Endothelial cell of umbilical vein (primary cell): ENCODE measurements at regions of chr15 and their contacts with region 1.

Region 1: GRCh38 chr15:39429898-39430357 is 151.0 kb upstream of the THBS1 start:
- DNase-seq: peak; percentile 99
- H3K4me3 ChIP-seq: no peak overlapping the region
- H3K27ac ChIP-seq: peak overlapping the region; percentile 98
- H3K4me1 ChIP-seq: peaks cover 52% of the 10 kb centered on the region
- H3K27me3 ChIP-seq: no peaks in the 10 kb centered on the region
- CTCF ChIP-seq: no peak
- POLR2A ChIP-seq: peak; percentile 75

Region 2: GRCh38 chr15:39140060-39140604 is 289.8 kb before region 1 on chr15:
- CTCF ChIA-PET with region 1: no interaction called
- POLR2A ChIA-PET with region 1: interaction called, 7 read pairs
- dilution Hi-C with region 1: no loop called
- intact Hi-C with region 1: loop called (anchors 1 kb)
- DNase-seq: peak; percentile 100
- H3K4me3 ChIP-seq: no peak overlapping the region
- H3K27ac ChIP-seq: peak overlapping the region; percentile 96
- H3K4me1 ChIP-seq: peaks cover 34% of the 10 kb centered on the region
- H3K27me3 ChIP-seq: no peaks in the 10 kb centered on the region
- CTCF ChIP-seq: no peak
- POLR2A ChIP-seq: peak; percentile 90

Region 3: DNA sequence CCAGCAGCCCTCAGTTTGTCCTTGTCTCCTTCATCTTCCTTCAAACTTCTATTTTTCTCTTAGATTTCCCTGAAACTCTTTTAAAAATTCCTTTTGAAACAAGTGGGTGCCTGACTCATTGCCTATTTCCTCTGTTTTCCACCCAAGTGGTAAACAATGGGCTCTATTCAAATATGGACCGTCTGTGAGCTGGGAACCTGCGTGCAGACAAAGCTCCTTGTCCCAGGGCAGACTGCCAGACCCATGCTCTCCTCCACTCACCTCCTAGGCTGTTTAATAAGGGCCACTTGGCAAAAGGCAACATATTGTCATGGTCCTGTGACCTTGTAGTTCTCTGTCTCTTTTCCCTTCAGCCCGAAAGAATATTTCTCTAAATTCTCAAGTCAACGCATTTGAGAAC is 181.7 kb before region 1 on chr15:
- CTCF ChIA-PET with region 1: no interaction called
- POLR2A ChIA-PET with region 1: interaction called, 3 read pairs
- dilution Hi-C with region 1: no loop called
- intact Hi-C with region 1: loop called (anchors 1 kb)
- DNase-seq: peak; percentile 99
- H3K4me3 ChIP-seq: peak overlapping the region in 1 of 3 experiments; percentile 0
- H3K27ac ChIP-seq: peak overlapping the region; percentile 98
- H3K4me1 ChIP-seq: peaks cover 72% of the 10 kb centered on the region
- H3K27me3 ChIP-seq: no peaks in the 10 kb centered on the region
- CTCF ChIP-seq: no peak
- POLR2A ChIP-seq: no peak

Region 4: DNA sequence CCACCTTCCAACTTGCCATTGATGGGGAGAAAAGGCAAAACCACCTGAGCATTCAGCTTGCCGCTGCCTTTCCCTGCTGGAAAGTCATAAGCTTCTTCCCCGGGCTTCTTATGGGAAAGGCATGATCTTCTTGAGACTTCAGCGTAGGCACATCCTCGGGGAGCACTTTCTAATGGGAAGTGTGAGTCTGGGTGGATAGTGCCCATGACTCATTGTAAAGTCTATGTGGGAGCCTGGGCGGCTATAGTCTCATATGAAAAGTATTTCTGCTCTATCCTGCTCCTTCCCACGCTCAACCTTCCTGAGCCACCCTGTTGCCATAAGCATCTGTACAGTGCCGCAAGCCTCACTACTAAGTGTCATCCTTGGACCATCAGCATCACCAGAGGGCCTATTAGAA is 159.0 kb before region 1 on chr15:
- CTCF ChIA-PET with region 1: interaction called, 3 read pairs
- POLR2A ChIA-PET with region 1: no interaction called
- dilution Hi-C with region 1: no loop called
- intact Hi-C with region 1: loop called (anchors 1 kb)
- DNase-seq: peak; percentile 90
- H3K4me3 ChIP-seq: no peak overlapping the region
- H3K27ac ChIP-seq: peak overlapping the region; percentile 89
- H3K4me1 ChIP-seq: peaks cover 53% of the 10 kb centered on the region
- H3K27me3 ChIP-seq: no peaks in the 10 kb centered on the region
- CTCF ChIP-seq: no peak
- POLR2A ChIP-seq: no peak

Region 5: DNA sequence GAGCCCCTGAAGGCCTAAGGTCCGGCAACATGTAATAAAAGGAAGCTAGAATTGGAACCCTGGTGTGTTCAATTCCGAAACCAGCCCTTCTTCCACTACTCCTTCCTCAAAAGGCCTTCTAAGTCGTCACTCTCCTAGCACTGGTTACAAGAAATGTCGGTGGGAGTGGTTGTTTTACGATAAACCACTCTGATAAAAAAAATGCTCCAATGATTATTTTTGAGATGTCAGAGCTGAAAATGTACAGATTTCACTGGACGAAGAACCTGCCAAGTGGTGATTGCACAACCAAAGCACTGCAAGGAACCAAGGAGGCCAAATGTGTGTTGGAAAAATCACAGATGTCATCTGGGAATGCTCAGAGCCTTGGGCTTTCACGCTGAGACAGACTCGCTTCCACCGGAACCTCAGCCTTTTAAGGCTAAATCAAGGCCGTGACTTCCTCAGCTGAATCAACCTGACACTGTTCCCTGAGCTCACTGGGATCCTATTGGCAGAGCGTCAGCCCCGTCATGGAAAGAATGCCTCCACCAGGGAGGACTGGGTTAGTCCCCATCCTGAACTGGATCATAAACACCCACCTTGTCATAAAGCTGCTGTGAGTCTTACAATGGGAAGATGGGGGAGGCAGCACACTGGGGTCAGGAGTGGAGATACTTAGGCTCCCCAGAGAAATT is 42.8 kb after region 1 on chr15:
- CTCF ChIA-PET with region 1: interaction called, 6 read pairs
- POLR2A ChIA-PET with region 1: no interaction called
- dilution Hi-C with region 1: no loop called
- intact Hi-C with region 1: loop called (anchors 5 kb)
- DNase-seq: no peak
- H3K4me3 ChIP-seq: no peak overlapping the region
- H3K27ac ChIP-seq: no peak overlapping the region
- H3K4me1 ChIP-seq: peaks cover 26% of the 10 kb centered on the region
- H3K27me3 ChIP-seq: no peaks in the 10 kb centered on the region
- CTCF ChIP-seq: no peak
- POLR2A ChIP-seq: no peak